Ovary (tissue), 10 donors: ENCODE measurements at regions of chr3 and their contacts with region 1.

Region 1: GRCh38 chr3:129633751-129634392 is 27.4 kb upstream of the PLXND1 start:
- DNase-seq: no peak
- H3K4me3 ChIP-seq: no peak overlapping the region
- H3K27ac ChIP-seq: no peak overlapping the region
- H3K4me1 ChIP-seq: no peaks in the 10 kb centered on the region
- H3K27me3 ChIP-seq: no peaks in the 10 kb centered on the region
- CTCF ChIP-seq: no peak
- EP300 ChIP-seq: no peak
- POLR2A ChIP-seq: no peak

Region 2: DNA sequence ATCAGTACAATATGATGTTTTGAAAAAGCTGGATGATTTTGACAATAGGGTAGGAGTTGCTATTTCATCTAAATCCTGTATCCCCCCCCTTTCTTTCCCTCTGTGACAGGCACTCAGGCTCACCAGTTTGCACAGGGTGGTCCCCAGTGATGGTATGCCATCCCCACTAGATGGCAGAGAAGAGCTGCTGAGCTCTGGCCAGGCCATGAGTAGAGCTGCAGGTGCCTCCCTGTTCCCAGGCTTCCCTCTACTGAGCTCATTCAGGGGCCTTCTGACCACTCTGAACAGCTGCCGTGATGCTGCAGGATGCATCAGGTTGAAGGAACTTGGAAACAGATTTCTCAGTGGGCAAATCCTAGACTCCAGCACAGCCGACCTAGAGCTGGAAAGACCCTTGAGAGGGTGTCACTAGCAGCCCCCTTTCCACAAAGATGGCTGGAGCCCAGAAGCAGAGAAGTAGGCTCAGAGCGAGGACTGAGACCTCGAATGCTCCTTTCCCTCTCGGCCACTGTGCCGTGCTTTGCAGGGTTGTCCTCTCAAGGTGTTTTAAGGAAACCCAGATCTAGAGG is 250.5 kb before region 1 on chr3:
- intact Hi-C with region 1: loop called in 1 of 4 experiments (anchors 10 kb)
- DNase-seq: peak; percentile 58 to 71 (median 66)
- H3K4me3 ChIP-seq: no peak overlapping the region
- H3K27ac ChIP-seq: no peak overlapping the region
- H3K4me1 ChIP-seq: no peaks in the 10 kb centered on the region
- H3K27me3 ChIP-seq: no peaks in the 10 kb centered on the region
- CTCF ChIP-seq: peak; percentile 35 to 65 (median 53)
- EP300 ChIP-seq: no peak
- POLR2A ChIP-seq: no peak

Region 3: GRCh38 chr3:130014526-130014925 is 380.7 kb after region 1 on chr3:
- intact Hi-C with region 1: loop called in 1 of 4 experiments (anchors 10 kb)
- DNase-seq: no peak
- H3K4me3 ChIP-seq: no peak overlapping the region
- H3K27ac ChIP-seq: no peak overlapping the region
- H3K4me1 ChIP-seq: no peaks in the 10 kb centered on the region
- H3K27me3 ChIP-seq: no peaks in the 10 kb centered on the region
- CTCF ChIP-seq: no peak
- EP300 ChIP-seq: no peak
- POLR2A ChIP-seq: no peak

Region 4: DNA sequence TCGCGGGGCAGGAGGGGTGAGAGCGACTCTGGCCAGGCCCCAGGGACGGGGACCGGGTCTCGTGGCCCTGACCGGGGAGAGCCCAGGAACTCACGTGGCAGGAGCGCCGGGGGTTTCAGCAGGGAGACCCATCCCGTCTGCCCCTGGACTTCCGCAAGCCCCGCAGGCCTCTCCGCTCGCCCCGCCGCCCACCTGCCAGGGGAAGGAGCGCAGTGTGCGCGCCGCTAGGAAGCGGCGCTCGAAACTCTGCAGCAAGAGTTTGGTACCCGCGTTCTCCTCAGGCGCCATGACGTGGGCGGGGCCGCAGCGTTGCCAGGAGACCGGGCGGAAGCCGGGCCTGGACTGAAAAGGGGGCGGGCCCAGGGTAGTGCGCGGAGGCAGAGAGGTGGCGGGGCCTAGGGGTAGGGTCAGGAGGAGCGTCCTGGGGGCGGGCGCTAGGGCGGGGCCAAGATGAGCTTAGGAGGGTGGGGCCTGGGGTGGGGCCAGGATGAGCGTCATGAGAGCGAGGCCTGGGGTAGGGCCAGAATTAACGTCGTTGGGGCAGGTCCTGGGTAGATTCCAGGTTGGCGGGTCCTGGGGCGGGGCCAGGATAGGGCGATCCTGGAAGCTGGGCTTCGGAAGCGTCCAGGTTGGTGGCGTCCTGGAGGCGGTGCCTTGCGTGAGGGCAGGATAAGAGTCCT is 477.5 kb after region 1 on chr3:
- intact Hi-C with region 1: no loop called
- DNase-seq: peak; percentile 99
- H3K4me3 ChIP-seq: peak overlapping the region; percentile 71
- H3K27ac ChIP-seq: peak overlapping the region; percentile 64 to 75
- H3K4me1 ChIP-seq: no peaks in the 10 kb centered on the region
- H3K27me3 ChIP-seq: no peaks in the 10 kb centered on the region
- CTCF ChIP-seq: no peak
- EP300 ChIP-seq: no peak
- POLR2A ChIP-seq: no peak